Sigmoid colon (tissue), 7 donors: ENCODE measurements at regions of chr3 and their contacts with region 1.

Region 1: DNA sequence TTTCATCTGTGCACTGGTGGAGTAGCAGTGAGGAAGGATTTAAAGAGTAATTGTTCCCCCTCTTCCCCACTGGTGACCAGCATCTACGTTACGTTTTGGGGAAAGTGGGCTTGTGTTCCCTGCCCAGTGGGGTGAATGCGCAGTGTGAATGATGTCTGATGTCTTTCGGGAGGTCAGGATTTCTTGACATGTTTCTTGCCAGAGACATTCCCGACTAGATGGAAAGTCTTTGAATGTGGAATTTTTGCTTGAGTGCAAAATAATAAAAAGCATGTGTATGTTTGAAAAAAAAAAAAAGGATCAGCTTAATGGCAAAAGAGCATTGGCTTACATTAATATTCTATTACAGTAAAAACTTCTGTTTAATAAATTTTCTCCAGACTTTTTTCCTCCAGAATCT is 632.2 kb downstream of the FOXP1 start:
- DNase-seq: no peak
- H3K4me3 ChIP-seq: no peak overlapping the region
- H3K27ac ChIP-seq: no peak overlapping the region
- H3K4me1 ChIP-seq: peaks cover 0 to 13% (median 8%) of the 10 kb centered on the region in 4 donors
- H3K27me3 ChIP-seq: no peaks in the 10 kb centered on the region
- CTCF ChIP-seq: no peak
- EP300 ChIP-seq: no peak
- POLR2A ChIP-seq: no peak

Region 2: DNA sequence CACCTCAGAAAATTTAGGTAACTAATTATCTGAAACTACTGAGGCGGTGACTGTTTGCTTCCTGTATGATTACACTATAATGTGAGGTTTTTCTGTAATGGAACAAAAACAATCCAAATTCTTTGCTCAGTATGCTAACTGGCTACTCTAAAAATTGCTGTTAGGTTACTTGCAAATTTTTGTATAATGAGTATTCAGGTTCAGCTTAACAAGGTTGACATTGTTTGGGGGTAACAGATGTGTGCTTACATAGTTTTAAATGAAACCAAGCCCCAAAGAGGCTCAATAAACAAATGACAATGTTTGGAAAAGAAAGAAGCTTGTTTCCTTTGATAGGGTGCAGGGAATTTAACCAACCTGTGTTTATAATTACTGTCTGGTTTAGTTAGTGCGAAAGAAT is 224.4 kb before region 1 on chr3:
- intact Hi-C with region 1: loop called (anchors 10 kb)
- DNase-seq: no peak
- H3K4me3 ChIP-seq: no peak overlapping the region
- H3K27ac ChIP-seq: peak overlapping the region in 1 of 4 donors; percentile 18
- H3K4me1 ChIP-seq: peaks cover 0 to 30% (median 17%) of the 10 kb centered on the region in 4 donors
- H3K27me3 ChIP-seq: no peaks in the 10 kb centered on the region
- CTCF ChIP-seq: no peak
- EP300 ChIP-seq: no peak
- POLR2A ChIP-seq: no peak

Region 3: DNA sequence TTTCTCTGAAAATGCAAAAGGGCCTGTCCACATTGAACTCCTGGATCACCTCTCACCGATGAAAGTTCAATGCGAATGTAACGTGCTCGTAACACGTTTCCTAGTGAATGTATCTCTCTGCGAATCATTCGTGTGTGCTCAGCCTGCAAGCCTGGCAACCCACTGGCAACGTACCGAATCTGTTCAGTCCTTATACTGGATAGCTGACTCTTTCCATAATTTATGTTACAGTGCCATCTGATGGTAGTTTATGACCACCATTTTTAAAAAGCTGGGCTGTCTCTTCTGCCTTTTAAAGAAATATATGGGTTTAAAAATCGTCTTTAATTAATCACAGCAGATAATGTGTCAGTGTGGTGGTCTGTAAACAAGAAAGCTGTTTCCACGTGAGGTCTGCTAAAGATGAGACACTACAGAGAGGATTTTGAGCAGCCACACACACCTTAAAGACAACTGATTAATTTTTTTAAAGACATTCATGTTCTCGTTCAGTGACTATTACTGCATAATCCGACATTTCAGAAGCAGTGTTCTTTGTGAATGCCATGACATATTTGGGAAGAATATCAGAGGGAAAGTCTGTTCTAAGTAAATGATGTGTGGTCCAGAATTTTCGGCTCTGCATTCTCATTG is 701.6 kb after region 1 on chr3:
- intact Hi-C with region 1: loop called (anchors 10 kb)
- DNase-seq: peak; percentile 80
- H3K4me3 ChIP-seq: peak overlapping the region in 2 of 4 donors; percentile 23 to 29
- H3K27ac ChIP-seq: peak overlapping the region; percentile 11 to 58 (median 29)
- H3K4me1 ChIP-seq: peaks cover 0 to 23% (median 16%) of the 10 kb centered on the region in 4 donors
- H3K27me3 ChIP-seq: no peaks in the 10 kb centered on the region
- CTCF ChIP-seq: peak; percentile 25 to 43 (median 30)
- EP300 ChIP-seq: no peak
- POLR2A ChIP-seq: no peak